ENCODE measurements at regions of chr1 and their contacts with region 1.

Region 1: DNA sequence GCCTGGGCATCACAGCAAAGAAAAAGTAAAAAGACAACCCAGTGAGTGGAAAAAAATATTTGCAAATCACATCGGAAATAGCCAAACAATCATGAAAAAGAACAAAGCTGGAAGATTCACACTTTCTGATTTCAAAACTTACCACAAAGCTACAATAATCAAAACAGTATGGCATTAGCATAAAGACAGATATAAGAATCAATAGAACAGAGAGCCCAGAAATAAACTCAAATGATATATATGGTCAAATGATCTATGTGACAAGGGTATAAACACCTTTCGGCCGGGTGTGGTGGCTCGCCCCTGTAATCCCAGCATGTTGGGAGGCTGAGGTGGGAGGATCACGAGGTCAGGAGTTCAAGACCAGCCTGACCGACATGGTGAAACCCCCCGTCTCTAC is 13.5 kb downstream of the ACOT7 start:
- DNase-seq: no peak
- ATAC-seq: no peak
- H3K4me3 ChIP-seq: no peak overlapping the region
- H3K4me3 Mint-ChIP-seq: no peak overlapping the region
- H3K27ac ChIP-seq: no peak overlapping the region
- H3K27ac Mint-ChIP-seq: no peak overlapping the region
- H3K4me1 ChIP-seq: no peaks in the 10 kb centered on the region
- H3K4me1 Mint-ChIP-seq: no peaks in the 10 kb centered on the region
- H3K27me3 ChIP-seq: no peaks in the 10 kb centered on the region
- H3K27me3 Mint-ChIP-seq: no peaks in the 10 kb centered on the region

Region 2: GRCh38 chr1:6393400-6394187 is 13.6 kb after region 1 on chr1 and contains the start of gene ACOT7:
- CTCF ChIA-PET with region 1: no interaction called
- POLR2A ChIA-PET with region 1: no interaction called
- DNase-seq: peak; percentile 76 to 94 (median 86)
- ATAC-seq: peak; percentile 87 to 94 (median 90)
- H3K4me3 ChIP-seq: peak within 1 kb of the TSS; percentile 49 to 67
- H3K4me3 Mint-ChIP-seq: peak within 1 kb of the TSS; percentile 82 to 86 (median 82)
- H3K27ac ChIP-seq: peak within 1 kb of the TSS; percentile 82
- H3K27ac Mint-ChIP-seq: peak within 1 kb of the TSS; percentile 94 to 95
- H3K4me1 ChIP-seq: peaks cover 12 to 27% of the 10 kb centered on the region in 2 experiments
- H3K4me1 Mint-ChIP-seq: peaks cover 21 to 24% (median 24%) of the 10 kb centered on the region in 3 donors
- H3K27me3 ChIP-seq: peaks cover 0 to 5% of the 10 kb centered on the region in 2 experiments
- H3K27me3 Mint-ChIP-seq: no peaks in the 10 kb centered on the region
- total RNA-seq, gene ACOT7: 6.1 to 9.3 (median 7.4) TPM

Region 3: DNA sequence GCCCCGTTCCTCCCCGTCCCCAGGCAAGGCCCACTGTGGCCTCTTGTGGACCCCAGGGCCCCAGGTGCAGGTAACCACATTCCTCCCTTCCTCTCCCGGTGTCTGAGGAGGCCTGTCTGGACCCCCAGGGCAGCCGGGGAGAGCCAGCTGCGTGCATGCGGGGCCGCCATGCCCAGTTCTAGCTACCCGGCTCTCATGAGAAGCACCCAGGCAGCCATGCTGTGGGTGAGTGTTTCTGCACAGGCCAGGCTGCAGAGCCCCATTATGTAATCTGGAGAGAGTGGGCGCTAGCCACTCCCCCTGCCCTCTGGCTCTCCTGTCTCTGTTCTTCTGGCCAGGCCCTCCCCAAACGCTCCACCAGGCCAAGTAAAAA is 129.9 kb after region 1 on chr1:
- CTCF ChIA-PET with region 1: no interaction called
- POLR2A ChIA-PET with region 1: no interaction called
- DNase-seq: no peak
- ATAC-seq: no peak
- H3K4me3 ChIP-seq: no peak overlapping the region
- H3K4me3 Mint-ChIP-seq: no peak overlapping the region
- H3K27ac ChIP-seq: no peak overlapping the region
- H3K27ac Mint-ChIP-seq: no peak overlapping the region
- H3K4me1 ChIP-seq: no peaks in the 10 kb centered on the region
- H3K4me1 Mint-ChIP-seq: no peaks in the 10 kb centered on the region
- H3K27me3 ChIP-seq: peaks cover 0 to 46% of the 10 kb centered on the region in 2 experiments
- H3K27me3 Mint-ChIP-seq: peaks cover 6 to 9% of the 10 kb centered on the region in 2 donors

Region 4: DNA sequence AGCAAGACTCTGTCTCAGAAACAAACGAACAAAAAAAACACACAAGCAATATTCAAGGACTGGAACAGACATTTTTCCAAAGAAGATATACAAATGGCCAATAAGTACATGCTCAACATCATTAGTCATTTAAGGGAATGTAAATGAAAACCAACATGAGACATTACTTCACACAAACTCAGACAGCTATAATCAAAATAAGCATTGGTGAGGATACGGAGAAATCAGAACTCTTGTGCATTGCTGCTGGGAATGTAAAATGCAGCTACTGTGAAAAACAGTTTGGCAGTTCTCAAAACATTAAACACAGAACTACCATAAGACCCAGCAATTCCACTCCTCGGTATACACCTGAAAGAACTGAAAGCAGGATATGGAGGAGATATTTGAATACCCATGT is 158.9 kb after region 1 on chr1:
- CTCF ChIA-PET with region 1: no interaction called
- POLR2A ChIA-PET with region 1: interaction called, 3 to 17 read pairs
- DNase-seq: no peak
- ATAC-seq: no peak
- H3K4me3 ChIP-seq: no peak overlapping the region
- H3K4me3 Mint-ChIP-seq: no peak overlapping the region
- H3K27ac ChIP-seq: no peak overlapping the region
- H3K27ac Mint-ChIP-seq: peak overlapping the region; percentile 32 to 55
- H3K4me1 ChIP-seq: peaks cover 0 to 4% of the 10 kb centered on the region in 2 experiments
- H3K4me1 Mint-ChIP-seq: peaks cover 0 to 12% (median 4%) of the 10 kb centered on the region in 3 donors
- H3K27me3 ChIP-seq: no peaks in the 10 kb centered on the region
- H3K27me3 Mint-ChIP-seq: no peaks in the 10 kb centered on the region

Measured in T-cell (primary cell).